ENCODE measurements at regions of chr2 and their contacts with region 1.

Region 1: DNA sequence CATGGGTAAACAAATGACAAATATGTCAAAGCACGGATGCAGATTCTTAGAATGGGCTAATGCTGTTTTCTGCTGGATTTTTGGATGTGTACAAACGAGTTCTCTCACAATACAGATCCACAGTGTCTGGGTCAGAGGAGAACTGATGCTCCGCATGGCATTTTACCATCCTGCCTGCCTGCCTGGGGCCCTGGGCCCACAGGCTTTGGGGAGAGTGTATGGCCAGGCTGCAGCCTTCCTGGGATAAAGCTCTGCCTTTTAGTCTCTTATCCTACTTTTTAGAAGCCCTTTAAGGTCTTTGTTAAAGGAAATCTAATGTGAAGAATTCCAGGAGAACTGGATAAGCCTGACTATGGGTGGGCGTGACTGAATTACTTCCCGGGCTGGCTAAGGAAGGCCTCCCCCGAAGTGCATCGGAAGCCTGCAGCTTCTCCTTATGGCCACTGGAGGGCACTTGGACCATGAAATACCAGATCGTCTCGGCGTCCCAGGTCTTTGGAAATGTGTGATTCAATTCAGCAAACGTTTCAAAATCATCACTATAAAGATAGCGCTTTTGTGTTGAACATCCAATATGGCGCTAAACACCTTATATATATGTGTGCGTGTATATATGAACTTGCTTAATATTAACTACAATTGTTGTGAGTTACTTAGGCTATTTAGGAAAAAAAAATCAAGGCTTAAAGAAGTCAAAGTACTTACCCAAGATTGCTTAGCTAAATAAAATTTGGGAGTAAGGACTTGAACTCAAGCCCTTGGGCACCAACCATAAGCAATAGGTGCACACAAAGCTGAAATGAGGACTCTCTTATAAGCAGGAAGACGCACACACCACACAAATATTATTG is 15.2 kb upstream of the DNPEP start:
- DNase-seq: peak in 1 of 2 experiments; percentile 67
- H3K4me3 ChIP-seq: no peak overlapping the region
- H3K27ac ChIP-seq: no peak overlapping the region
- H3K4me1 ChIP-seq: peaks cover 3 to 22% (median 8%) of the 10 kb centered on the region in 4 experiments
- H3K27me3 ChIP-seq: peaks cover 0 to 2% (median 0%) of the 10 kb centered on the region in 4 experiments; a peak in 1 of 7 replicates
- CTCF ChIP-seq: peak; percentile 85 to 96 (median 93)
- EP300 ChIP-seq: no peak
- POLR2A ChIP-seq: no peak
- RAD21 ChIP-seq: peak; percentile 94 to 96

Region 2: GRCh38 chr2:219302376-219302968 is 100.4 kb before region 1 on chr2:
- CTCF ChIA-PET with region 1: no interaction called
- POLR2A ChIA-PET with region 1: no interaction called
- DNase-seq: no peak
- H3K4me3 ChIP-seq: no peak overlapping the region
- H3K27ac ChIP-seq: no peak overlapping the region
- H3K4me1 ChIP-seq: peaks cover 0 to 4% (median 3%) of the 10 kb centered on the region in 4 experiments; a peak in 4 of 7 replicates
- H3K27me3 ChIP-seq: peaks cover 0 to 16% (median 8%) of the 10 kb centered on the region in 4 experiments; a peak in 3 of 7 replicates
- CTCF ChIP-seq: no peak
- EP300 ChIP-seq: no peak
- POLR2A ChIP-seq: no peak
- RAD21 ChIP-seq: no peak

Region 3: GRCh38 chr2:219418155-219418569 is 15.3 kb after region 1 on chr2 and contains the start of gene DES:
- CTCF ChIA-PET with region 1: interaction called, 128 read pairs
- POLR2A ChIA-PET with region 1: interaction called, 17 read pairs
- DNase-seq: no peak
- H3K4me3 ChIP-seq: peak within 1 kb of the TSS in 2 of 4 experiments; percentile 2 to 51; a peak in 3 of 8 replicates
- H3K27ac ChIP-seq: no peak within 1 kb of the TSS
- H3K4me1 ChIP-seq: peaks cover 8 to 26% (median 15%) of the 10 kb centered on the region in 4 experiments
- H3K27me3 ChIP-seq: peaks cover 15 to 36% (median 29%) of the 10 kb centered on the region in 4 experiments
- CTCF ChIP-seq: no peak
- EP300 ChIP-seq: no peak
- POLR2A ChIP-seq: no peak
- RAD21 ChIP-seq: no peak
- total RNA-seq, gene DES: 1.5 and 1.8 TPM in 2 replicates

Region 4: GRCh38 chr2:219452838-219453317 is 50.0 kb after region 1 on chr2:
- CTCF ChIA-PET with region 1: interaction called, 73 read pairs
- POLR2A ChIA-PET with region 1: interaction called, 7 read pairs
- DNase-seq: no peak
- H3K4me3 ChIP-seq: no peak overlapping the region
- H3K27ac ChIP-seq: no peak overlapping the region
- H3K4me1 ChIP-seq: peaks cover 0 to 19% (median 3%) of the 10 kb centered on the region in 4 experiments; a peak in 5 of 7 replicates
- H3K27me3 ChIP-seq: peaks cover 0 to 13% (median 9%) of the 10 kb centered on the region in 4 experiments; a peak in 5 of 7 replicates
- CTCF ChIP-seq: no peak
- EP300 ChIP-seq: no peak
- POLR2A ChIP-seq: no peak
- RAD21 ChIP-seq: no peak

Region 5: DNA sequence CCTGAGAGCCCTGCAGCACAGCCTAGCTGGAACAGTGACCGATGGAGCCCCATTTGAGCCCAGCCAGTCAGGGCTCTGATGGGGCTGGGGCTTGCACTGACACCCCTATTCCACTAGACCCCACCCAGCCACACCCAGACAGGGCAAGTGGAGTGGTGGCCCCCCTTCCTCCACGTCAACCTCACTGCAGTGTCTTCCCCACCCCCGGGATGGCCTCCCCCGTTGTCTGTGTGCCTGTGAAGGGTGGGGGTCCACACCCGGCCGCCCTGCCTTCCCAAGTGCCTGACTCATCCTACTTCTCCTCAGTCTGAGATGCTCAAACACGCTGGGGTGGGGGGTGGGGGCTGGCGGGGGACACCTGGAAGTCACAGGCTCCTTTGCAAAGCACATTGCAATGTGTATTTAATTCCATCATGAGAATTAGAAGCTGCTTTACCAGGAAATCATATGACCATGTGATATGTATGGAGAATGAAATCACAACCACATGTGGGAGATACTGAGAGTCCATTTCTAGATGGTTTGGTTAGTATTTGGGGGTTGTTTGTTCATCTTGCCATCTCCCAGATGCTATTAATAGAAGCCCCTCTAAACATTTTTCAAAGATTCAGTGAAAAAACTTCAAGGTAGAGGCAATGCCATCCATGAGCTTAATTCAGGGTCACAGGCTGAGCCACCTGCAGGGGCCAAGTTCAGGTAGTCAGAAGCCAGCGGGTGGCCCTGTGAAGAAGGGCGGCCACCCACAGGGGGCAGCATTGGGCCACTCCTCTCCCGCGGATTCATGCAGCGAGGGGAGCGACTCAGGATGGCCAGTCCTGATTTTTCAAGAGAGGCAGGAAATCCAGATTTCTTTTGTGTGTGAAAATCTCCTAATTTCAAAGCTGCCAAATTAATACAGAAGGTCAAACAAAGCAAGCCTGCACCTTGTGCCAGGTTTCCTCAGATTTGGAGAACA is 73.1 kb after region 1 on chr2:
- CTCF ChIA-PET with region 1: interaction called, 33 read pairs
- POLR2A ChIA-PET with region 1: no interaction called
- DNase-seq: peak in 1 of 2 experiments; percentile 95
- H3K4me3 ChIP-seq: peak overlapping the region; percentile 29 to 57 (median 36); a peak in 7 of 8 replicates
- H3K27ac ChIP-seq: no peak overlapping the region
- H3K4me1 ChIP-seq: peaks cover 0 to 13% (median 6%) of the 10 kb centered on the region in 4 experiments; a peak in 5 of 7 replicates
- H3K27me3 ChIP-seq: 0 out of 7 replicates have a peak, but pooled peaks cover 0 to 2% (median 0%) of the 10 kb centered on the region in 4 experiments
- CTCF ChIP-seq: peak in 2 of 3 experiments; percentile 87 to 93; a peak in 3 of 4 replicates
- EP300 ChIP-seq: no peak
- POLR2A ChIP-seq: no peak; a peak in 1 of 3 replicates
- RAD21 ChIP-seq: peak; percentile 75 to 82

Region 6: GRCh38 chr2:219498280-219499057 is 95.6 kb after region 1 on chr2 and contains the start of gene GMPPA:
- CTCF ChIA-PET with region 1: interaction called, 83 read pairs
- POLR2A ChIA-PET with region 1: no interaction called
- DNase-seq: peak; percentile 95 to 97
- H3K4me3 ChIP-seq: peak within 1 kb of the TSS; percentile 57 to 72 (median 65)
- H3K27ac ChIP-seq: no peak within 1 kb of the TSS
- H3K4me1 ChIP-seq: peaks cover 9 to 41% (median 21%) of the 10 kb centered on the region in 4 experiments
- H3K27me3 ChIP-seq: peaks cover 20 to 40% (median 32%) of the 10 kb centered on the region in 4 experiments
- CTCF ChIP-seq: no peak; a peak in 1 of 4 replicates
- EP300 ChIP-seq: no peak
- POLR2A ChIP-seq: peak in 1 of 2 experiments; percentile 46; a peak in 1 of 3 replicates
- RAD21 ChIP-seq: no peak
- total RNA-seq, gene GMPPA: 34.3 and 35.3 TPM in 2 replicates

Region 7: GRCh38 chr2:219543601-219544358 is 140.9 kb after region 1 on chr2 and contains the starts of genes CHPF and TMEM198:
- CTCF ChIA-PET with region 1: interaction called, 26 read pairs
- POLR2A ChIA-PET with region 1: no interaction called
- DNase-seq: peak; percentile 98
- H3K4me3 ChIP-seq: peak within 1 kb of the TSS; percentile 73 to 90 (median 80)
- H3K27ac ChIP-seq: peak within 1 kb of the TSS; percentile 19; the same call in 1 of the 2 replicates
- H3K4me1 ChIP-seq: peaks cover 2 to 13% (median 7%) of the 10 kb centered on the region in 4 experiments; a peak in 6 of 7 replicates
- H3K27me3 ChIP-seq: peaks cover 0 to 4% (median 0%) of the 10 kb centered on the region in 4 experiments; a peak in 2 of 7 replicates
- CTCF ChIP-seq: no peak
- EP300 ChIP-seq: peak in 1 of 2 experiments; percentile 88; a peak in 1 of 3 replicates
- POLR2A ChIP-seq: peak in 1 of 2 experiments; percentile 60; a peak in 2 of 3 replicates
- RAD21 ChIP-seq: no peak; a peak in 1 of 4 replicates
- total RNA-seq, gene CHPF: 62.9 and 68.1 TPM in 2 replicates
- total RNA-seq, gene TMEM198: 10.2 and 11.0 TPM in 2 replicates

Region 8: DNA sequence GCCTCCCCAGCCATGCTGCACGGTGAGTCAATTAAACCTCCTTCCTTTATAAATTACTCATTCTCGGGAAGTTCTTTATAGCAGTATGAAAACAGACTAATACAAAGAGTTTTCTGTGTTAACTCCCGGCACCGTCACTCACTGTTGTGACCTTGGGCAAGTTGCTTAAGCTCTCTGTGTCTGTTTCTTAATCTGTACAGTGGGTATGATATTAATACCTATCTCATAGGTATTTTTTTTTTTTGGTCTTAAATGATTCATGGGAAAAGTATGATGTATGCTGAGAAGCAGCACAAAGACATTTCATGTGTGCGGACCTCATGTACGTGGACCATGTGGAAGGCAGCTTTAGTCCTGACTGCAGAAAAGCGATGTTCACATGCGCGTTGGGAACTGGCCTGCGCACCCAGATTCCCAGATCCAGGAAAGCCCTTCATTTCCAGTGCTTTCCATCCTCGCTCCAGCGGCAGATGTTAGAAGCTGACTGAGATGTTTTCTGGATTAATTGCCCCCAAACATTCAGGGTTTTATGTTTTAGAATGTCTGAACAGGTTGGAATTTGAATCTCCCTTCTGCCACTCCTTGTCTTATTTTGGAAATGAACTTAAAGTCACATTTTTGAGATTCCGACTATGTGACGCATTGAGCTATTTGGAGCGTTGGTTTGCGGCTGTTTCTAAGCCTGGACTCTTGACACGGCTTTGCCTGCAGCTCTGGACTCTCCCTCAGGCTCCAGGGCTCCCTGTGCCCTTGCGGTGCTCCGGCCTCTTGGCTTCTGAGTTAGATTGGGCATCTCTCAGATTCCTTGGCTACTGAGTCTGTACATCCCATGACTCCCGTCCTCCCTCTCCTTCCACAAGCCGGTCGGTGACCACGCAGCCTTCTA is 285.9 kb after region 1 on chr2:
- CTCF ChIA-PET with region 1: no interaction called
- POLR2A ChIA-PET with region 1: no interaction called
- DNase-seq: no peak
- H3K4me3 ChIP-seq: no peak overlapping the region
- H3K27ac ChIP-seq: no peak overlapping the region
- H3K4me1 ChIP-seq: peaks cover 3 to 15% (median 6%) of the 10 kb centered on the region in 4 experiments
- H3K27me3 ChIP-seq: no peaks in the 10 kb centered on the region
- CTCF ChIP-seq: no peak
- EP300 ChIP-seq: no peak
- POLR2A ChIP-seq: no peak
- RAD21 ChIP-seq: no peak

Measured in H1 (cell line).